ENCODE measurements at regions of chr3 and their contacts with region 1.

Region 1: GRCh38 chr3:15205934-15206661 is at the start of gene CAPN7:
- DNase-seq: peak; percentile 97
- ATAC-seq: peak; percentile 90
- H3K4me3 Mint-ChIP-seq: peak within 1 kb of the TSS; percentile 89
- H3K27ac Mint-ChIP-seq: peak within 1 kb of the TSS; percentile 87
- H3K4me1 Mint-ChIP-seq: peaks cover 24% of the 10 kb centered on the region
- H3K27me3 Mint-ChIP-seq: no peaks in the 10 kb centered on the region
- CTCF ChIP-seq: no peak
- total RNA-seq, gene CAPN7: 35.0 and 45.1 TPM in 2 replicates

Region 2: DNA sequence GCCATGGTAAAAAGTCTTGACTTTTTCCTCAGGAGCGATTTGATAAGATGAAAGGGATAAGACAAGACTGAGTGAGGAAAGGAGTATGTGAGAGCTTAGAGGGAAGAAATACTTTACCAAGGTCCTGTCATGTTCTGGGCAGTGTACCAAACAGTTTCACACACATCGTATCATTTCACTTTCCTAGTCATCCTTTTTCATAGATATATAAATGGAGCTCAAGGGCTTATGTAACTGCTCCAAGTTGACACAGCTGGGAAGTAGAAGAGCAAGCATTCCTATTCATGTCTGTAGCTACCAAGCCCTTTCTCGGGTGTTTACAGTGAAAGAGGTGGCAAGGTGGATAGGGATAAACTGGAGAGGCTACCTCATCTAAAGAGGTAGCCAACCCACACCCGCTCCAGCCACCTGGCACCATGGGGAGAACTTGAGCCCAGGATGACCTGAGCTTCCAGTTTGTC is 198.4 kb before region 1 on chr3:
- CTCF ChIA-PET with region 1: no interaction called
- POLR2A ChIA-PET with region 1: no interaction called
- intact Hi-C with region 1: no loop called
- DNase-seq: no peak
- ATAC-seq: no peak
- H3K4me3 Mint-ChIP-seq: no peak overlapping the region
- H3K27ac Mint-ChIP-seq: no peak overlapping the region
- H3K4me1 Mint-ChIP-seq: peaks cover 6% of the 10 kb centered on the region
- H3K27me3 Mint-ChIP-seq: no peaks in the 10 kb centered on the region
- CTCF ChIP-seq: no peak

Region 3: DNA sequence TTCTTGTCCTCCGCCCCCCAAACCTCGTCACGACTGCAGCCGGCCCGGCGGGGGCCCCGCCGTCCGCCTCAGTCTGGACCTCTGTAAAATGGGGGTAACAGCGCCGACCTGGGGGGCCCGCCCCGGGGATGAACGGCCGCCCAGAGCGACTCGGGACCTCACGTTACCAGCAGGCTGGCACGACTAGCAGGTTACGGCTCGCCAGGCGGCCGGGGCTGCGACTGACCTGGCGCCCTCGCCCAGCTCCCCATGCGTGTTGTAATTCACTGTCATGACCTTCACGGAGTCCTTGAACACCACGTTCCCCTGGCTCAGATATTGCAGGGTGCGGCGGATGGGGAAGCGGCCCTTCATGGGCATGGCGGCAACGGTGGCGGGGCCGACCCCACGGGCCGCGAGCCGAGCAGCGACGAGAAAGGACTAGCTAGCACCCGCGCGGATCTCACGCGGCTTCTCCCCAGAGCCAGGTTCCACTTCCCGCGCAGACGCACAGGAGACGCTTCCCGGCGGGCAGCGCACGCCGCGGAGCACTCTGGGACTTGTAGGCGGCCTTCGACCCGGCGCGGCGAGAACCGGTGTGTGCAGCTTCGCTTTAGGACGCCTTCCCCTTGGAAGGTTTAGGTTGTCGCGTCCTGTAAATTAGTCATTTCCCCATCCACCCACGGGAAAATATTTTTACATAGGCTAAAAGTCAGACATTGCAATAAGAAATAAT is 141.1 kb before region 1 on chr3 and contains the start of gene MRPS25:
- CTCF ChIA-PET with region 1: no interaction called
- POLR2A ChIA-PET with region 1: no interaction called
- intact Hi-C with region 1: loop called (anchors 1 kb)
- DNase-seq: peak; percentile 84
- ATAC-seq: peak; percentile 97
- H3K4me3 Mint-ChIP-seq: peak within 1 kb of the TSS; percentile 98
- H3K27ac Mint-ChIP-seq: peak within 1 kb of the TSS; percentile 95
- H3K4me1 Mint-ChIP-seq: peaks cover 25% of the 10 kb centered on the region
- H3K27me3 Mint-ChIP-seq: no peaks in the 10 kb centered on the region
- CTCF ChIP-seq: no peak
- total RNA-seq, gene MRPS25: 72.4 and 85.9 TPM in 2 replicates

Region 4: DNA sequence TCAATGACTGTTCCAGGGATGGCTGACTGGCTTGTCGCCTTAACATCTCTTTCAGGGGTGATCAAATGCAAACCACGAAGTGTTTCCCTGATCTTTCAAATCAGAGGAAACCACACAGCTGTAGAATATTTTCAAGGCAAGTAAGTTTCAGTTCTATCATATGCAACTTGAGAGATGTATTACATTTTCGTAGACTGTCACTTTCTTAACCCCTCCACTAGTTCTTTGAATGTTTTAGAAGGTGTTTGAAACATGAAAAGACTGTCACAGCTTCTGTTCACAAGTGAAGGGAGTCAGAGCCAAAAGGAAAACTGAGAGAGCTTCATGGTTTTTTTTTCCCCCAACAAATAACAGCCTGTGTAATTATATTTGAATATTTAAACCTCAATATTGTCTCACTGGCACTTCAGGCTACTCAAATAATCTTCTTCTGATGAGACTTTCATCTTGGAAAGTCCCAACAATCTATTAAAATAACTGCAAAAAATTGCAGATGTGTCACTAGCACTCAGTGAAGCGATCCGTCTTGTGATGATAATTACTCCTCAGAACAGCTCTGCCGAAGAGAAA is 26.0 kb before region 1 on chr3:
- CTCF ChIA-PET with region 1: interaction called, 11 read pairs
- POLR2A ChIA-PET with region 1: interaction called, 5 read pairs
- intact Hi-C with region 1: no loop called
- DNase-seq: no peak
- ATAC-seq: peak; percentile 81
- H3K4me3 Mint-ChIP-seq: peak overlapping the region; percentile 60
- H3K27ac Mint-ChIP-seq: peak overlapping the region; percentile 74
- H3K4me1 Mint-ChIP-seq: peaks cover 21% of the 10 kb centered on the region
- H3K27me3 Mint-ChIP-seq: peaks cover 2% of the 10 kb centered on the region
- CTCF ChIP-seq: no peak

Region 5: DNA sequence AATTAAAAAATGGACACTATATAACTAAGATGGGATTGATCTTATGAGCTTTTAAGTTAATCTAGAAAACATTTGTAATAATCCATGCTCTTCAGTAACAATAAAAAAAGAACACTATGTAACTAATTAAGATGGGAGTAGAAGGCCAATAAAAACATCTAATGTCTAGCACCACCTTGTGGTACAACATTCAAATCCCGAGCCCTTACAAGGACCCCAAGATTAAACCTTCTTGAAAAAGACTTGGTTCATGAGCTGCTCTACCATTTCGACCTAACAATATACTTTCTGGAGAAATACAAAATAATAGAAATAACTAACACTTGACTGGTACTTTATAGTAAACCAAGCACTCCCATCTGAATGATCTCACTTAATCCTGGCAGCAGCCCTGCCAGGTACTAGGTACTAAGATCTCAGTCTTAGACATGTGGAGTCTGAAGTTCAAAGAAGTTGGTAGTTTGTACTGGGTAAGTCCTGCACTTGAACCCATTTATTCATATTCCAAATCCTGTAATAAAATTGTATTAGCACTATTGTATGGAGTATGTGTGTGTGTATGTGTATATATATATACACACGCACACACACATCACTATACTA is 199.5 kb after region 1 on chr3:
- CTCF ChIA-PET with region 1: interaction called, 87 read pairs
- POLR2A ChIA-PET with region 1: interaction called, 9 read pairs
- intact Hi-C with region 1: loop called (anchors 1 kb)
- DNase-seq: no peak
- ATAC-seq: peak; percentile 73
- H3K4me3 Mint-ChIP-seq: no peak overlapping the region
- H3K27ac Mint-ChIP-seq: no peak overlapping the region
- H3K4me1 Mint-ChIP-seq: peaks cover 24% of the 10 kb centered on the region
- H3K27me3 Mint-ChIP-seq: no peaks in the 10 kb centered on the region
- CTCF ChIP-seq: peak; percentile 27

Region 6: GRCh38 chr3:15629860-15630597 is 423.9 kb after region 1 on chr3:
- CTCF ChIA-PET with region 1: no interaction called
- POLR2A ChIA-PET with region 1: no interaction called
- intact Hi-C with region 1: loop called (anchors 1 kb)
- DNase-seq: no peak
- ATAC-seq: peak; percentile 100
- H3K4me3 Mint-ChIP-seq: peak overlapping the region; percentile 56
- H3K27ac Mint-ChIP-seq: peak overlapping the region; percentile 41
- H3K4me1 Mint-ChIP-seq: peaks cover 14% of the 10 kb centered on the region
- H3K27me3 Mint-ChIP-seq: no peaks in the 10 kb centered on the region
- CTCF ChIP-seq: no peak

Region 7: DNA sequence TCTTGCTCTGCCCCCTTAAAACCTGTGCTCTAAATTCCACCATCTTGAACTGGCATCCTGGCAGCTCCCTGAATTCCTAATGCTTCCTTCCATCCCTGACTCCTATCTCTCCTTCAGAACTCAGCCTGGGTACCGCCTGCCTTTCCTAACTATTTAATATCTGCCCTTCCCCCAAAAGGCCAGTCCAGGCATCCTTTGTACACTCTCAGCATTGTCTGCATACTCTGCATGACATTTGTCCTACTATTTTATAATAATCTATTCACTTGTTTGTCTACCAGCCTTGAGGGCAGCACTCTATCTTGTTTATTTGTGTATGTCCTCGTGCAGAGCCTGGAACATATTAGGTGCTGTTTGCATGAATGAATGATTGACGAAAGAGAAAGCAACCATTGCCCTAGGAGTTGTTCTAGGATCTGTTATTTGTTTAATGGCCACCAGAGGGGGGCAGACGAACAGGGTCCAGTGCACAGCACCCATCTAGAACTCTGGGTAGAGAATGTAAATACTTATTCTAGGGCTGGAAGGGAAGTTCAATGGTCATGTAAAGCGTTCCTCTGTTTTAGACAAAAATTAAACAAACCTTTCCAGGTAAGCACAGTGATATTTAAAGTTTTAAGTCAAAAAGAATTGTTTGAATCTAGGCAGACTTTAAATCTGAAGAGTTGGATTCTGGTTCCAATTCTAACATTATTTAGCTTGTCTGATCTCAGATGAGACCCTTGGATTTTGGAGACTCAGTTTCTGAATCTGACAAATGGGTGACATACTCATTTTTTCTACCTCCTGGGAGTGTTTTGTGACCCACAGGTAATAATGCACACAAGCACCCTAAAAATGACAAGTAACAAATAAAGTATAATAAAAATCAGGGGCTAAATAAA is 842.6 kb after region 1 on chr3:
- CTCF ChIA-PET with region 1: no interaction called
- POLR2A ChIA-PET with region 1: no interaction called
- intact Hi-C with region 1: loop called (anchors 2 kb)
- DNase-seq: no peak
- ATAC-seq: peak; percentile 86
- H3K4me3 Mint-ChIP-seq: no peak overlapping the region
- H3K27ac Mint-ChIP-seq: no peak overlapping the region
- H3K4me1 Mint-ChIP-seq: no peaks in the 10 kb centered on the region
- H3K27me3 Mint-ChIP-seq: peaks cover 2% of the 10 kb centered on the region
- CTCF ChIP-seq: peak; percentile 27